Gastrocnemius medialis (tissue), 4 donors: ENCODE measurements at regions of chr1 and their contacts with region 1.

Region 1: DNA sequence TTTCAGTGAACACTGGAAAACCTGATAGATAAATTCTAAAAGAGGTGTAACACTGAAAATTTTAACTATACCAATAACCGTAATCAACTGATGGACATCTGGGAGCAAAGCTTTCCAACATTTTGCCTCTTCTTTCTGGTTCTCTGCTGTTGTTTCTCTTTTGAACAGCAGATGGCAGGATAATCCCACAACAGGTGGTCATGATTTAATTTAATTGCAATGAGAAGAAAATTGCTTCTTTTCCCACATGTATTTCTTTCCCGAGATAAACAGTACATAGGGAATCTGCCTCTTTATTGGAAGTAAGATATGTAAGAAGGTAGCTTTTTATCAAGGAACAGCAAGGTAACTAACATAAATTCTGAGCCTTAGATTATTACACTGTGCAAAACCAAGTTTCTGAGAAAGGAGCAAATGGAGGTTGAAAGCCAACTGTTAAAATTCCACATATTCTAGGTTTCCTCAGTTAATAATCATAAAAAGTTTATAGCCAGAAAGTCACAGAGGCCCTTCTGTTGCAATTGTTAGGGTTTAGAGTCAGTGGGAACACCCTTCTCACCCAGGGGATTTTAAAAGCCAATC is 72.9 kb downstream of the RPS6KA1 start:
- DNase-seq: peak in 1 of 2 donors; percentile 19
- ATAC-seq: peak; percentile 42 to 66
- H3K4me3 ChIP-seq: no peak overlapping the region
- H3K27ac ChIP-seq: no peak overlapping the region
- H3K4me1 ChIP-seq: no peaks in the 10 kb centered on the region
- H3K27me3 ChIP-seq: no peaks in the 10 kb centered on the region
- CTCF ChIP-seq: peak; percentile 80 to 98 (median 89)
- POLR2A ChIP-seq: no peak

Region 2: GRCh38 chr1:26677306-26678115 is 75.0 kb after region 1 on chr1:
- in situ Hi-C with region 1: loop called in 3 of 4 experiments (anchors 10 kb)
- intact Hi-C with region 1: loop called (anchors 1 kb)
- DNase-seq: peak; percentile 81 to 91
- ATAC-seq: peak; percentile 100
- H3K4me3 ChIP-seq: peak overlapping the region in 3 of 4 donors; percentile 2 to 38 (median 10)
- H3K27ac ChIP-seq: peak overlapping the region in 3 of 4 donors; percentile 19 to 51 (median 45)
- H3K4me1 ChIP-seq: peaks cover 4 to 9% of the 10 kb centered on the region in 2 donors
- H3K27me3 ChIP-seq: no peaks in the 10 kb centered on the region
- CTCF ChIP-seq: peak; percentile 74 to 88 (median 79)
- POLR2A ChIP-seq: no peak

Region 3: DNA sequence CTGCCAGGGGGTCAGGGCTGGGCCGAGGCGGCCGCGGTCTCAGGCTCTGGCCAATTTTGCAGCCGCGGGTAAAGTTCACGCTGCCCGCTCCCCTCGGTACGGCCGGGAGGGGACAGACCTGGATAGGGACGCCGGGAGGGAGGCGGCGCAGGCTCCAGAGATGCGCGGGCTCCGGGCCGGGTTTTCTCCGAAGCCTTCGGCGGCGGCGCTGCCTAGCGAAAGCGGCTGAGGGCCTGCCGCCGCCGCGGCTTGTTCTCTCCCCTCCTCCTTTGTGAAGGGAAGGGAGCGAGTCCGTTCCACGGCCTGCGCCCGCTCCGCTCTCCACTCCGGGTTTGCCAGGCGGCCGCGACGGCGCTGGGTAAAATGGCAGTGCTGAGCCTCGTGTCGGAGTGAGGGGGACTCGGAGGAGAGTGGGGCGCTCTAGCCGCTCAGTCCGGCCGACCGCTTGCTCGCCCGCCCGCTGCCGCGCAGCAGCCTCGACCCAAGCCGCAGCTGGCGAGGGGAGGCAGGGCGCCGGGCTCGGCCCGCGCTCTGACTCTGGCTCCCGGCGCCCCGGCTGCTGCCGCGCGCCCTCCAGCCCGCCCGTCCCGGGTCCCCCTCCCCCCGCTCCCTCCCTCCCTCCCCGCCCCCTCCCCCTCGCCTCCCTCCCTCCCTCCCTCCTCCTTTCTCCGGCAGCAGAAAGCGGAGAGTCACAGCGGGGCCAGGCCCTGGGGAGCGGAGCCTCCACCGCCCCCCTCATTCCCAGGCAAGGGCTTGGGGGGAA is 93.1 kb after region 1 on chr1 and contains the start of gene ARID1A:
- in situ Hi-C with region 1: no loop called
- intact Hi-C with region 1: loop called (anchors 5 kb)
- DNase-seq: peak; percentile 90 to 95
- ATAC-seq: peak; percentile 55 to 61
- H3K4me3 ChIP-seq: peak within 1 kb of the TSS; percentile 75 to 89 (median 84)
- H3K27ac ChIP-seq: peak within 1 kb of the TSS; percentile 92 to 95 (median 95)
- H3K4me1 ChIP-seq: peaks cover 49 to 56% of the 10 kb centered on the region in 2 donors
- H3K27me3 ChIP-seq: no peaks in the 10 kb centered on the region
- CTCF ChIP-seq: peak in 4 of 5 experiments; percentile 15 to 68 (median 38)
- POLR2A ChIP-seq: peak; percentile 69 to 77
- total RNA-seq, gene ARID1A: 22.3 to 51.0 (median 35.0) TPM

Region 4: DNA sequence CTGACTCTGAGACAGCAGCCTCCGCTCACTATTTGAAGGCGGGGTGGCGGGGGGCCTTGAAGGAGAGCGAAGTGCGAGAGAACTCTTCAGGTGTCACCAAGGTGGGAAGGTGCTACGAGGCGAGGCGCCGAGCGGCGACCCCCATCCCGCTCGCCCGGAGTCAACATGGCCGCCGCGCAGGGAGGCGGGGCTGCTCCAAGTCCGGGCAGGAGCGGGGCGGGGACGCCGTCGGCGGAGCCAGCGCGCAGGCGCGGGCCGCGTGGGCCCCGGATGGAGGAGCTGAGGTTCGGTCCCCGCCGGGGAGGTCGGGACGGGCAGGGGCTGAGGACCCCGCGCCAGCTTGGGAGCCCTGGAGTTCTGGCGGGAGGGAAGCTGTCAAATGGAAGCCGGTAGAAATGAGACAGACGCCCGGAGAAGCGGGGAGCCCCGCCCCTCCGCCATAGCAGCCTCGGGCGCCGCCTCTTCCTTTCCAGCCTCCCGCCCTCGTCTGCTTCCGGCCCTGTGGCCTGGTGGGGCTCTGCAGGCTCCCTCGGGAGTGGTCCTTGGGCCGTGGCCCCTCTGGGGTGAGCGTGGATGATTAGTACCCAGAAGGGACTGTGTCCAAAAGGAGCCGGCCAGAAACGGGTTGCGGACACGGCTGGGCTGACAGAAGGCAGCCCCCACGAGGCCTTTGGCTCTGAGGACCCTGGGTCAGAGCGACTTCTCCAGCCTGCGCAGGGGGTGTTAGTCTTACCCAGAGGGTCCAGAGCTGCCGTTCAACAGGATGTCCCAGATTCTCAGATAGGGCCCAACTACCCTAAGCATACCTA is 185.4 kb after region 1 on chr1 and contains the start of gene PIGV:
- in situ Hi-C with region 1: loop called in 3 of 4 experiments (anchors 5 to 10 kb)
- intact Hi-C with region 1: loop called (anchors 1 kb)
- DNase-seq: peak; percentile 68 to 81
- ATAC-seq: peak; percentile 81 to 82
- H3K4me3 ChIP-seq: peak within 1 kb of the TSS; percentile 69 to 87 (median 84)
- H3K27ac ChIP-seq: peak within 1 kb of the TSS; percentile 93 to 99 (median 98)
- H3K4me1 ChIP-seq: peaks cover 51 to 67% of the 10 kb centered on the region in 2 donors
- H3K27me3 ChIP-seq: no peaks in the 10 kb centered on the region
- CTCF ChIP-seq: peak; percentile 23 to 40 (median 38)
- POLR2A ChIP-seq: peak; percentile 78 to 84
- total RNA-seq, gene PIGV: 2.9 to 16.0 (median 5.8) TPM

Region 5: DNA sequence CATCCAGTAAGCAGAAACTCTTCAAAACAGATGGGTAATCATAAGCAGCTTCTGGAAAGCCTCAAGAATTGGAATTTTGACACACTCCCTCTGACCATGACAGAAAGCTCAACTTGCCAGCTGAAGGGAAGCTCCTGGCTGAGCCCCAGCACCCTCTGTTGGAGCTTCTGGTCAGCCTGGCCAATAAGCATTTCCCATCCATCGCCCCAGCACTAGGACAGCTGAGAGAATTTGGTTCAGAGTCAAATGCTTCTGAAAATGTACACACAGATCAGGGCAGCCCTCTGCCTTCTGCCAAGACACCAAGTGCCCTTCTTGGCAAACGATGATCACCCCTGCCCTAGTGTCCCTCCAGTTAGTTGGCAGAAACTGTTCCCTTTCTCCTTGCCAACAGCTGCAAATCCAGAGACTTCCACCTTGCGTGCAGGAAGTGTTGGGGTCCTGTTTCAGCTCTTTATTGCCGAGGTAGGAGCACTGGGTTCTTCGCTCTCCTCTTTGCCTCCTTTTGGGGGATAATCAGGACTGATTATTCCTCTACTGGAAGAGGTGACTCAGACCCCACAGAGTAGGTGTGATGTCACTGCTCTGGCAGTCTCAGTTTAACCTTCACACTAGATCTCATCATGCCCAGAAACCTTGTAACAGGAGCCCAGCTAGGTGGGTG is 197.1 kb after region 1 on chr1:
- in situ Hi-C with region 1: loop called (anchors 5 to 10 kb)
- intact Hi-C with region 1: no loop called
- DNase-seq: peak; percentile 51 to 75
- ATAC-seq: peak; percentile 82 to 85
- H3K4me3 ChIP-seq: peak overlapping the region; percentile 5 to 24 (median 14)
- H3K27ac ChIP-seq: peak overlapping the region; percentile 77 to 89 (median 80)
- H3K4me1 ChIP-seq: peaks cover 30 to 39% of the 10 kb centered on the region in 2 donors
- H3K27me3 ChIP-seq: no peaks in the 10 kb centered on the region
- CTCF ChIP-seq: no peak
- POLR2A ChIP-seq: no peak

Region 6: GRCh38 chr1:26874896-26875295 is 272.4 kb after region 1 on chr1:
- in situ Hi-C with region 1: no loop called
- intact Hi-C with region 1: loop called (anchors 5 kb)
- DNase-seq: no peak
- ATAC-seq: no peak
- H3K4me3 ChIP-seq: no peak overlapping the region
- H3K27ac ChIP-seq: no peak overlapping the region
- H3K4me1 ChIP-seq: peaks cover 0 to 4% of the 10 kb centered on the region in 2 donors
- H3K27me3 ChIP-seq: no peaks in the 10 kb centered on the region
- CTCF ChIP-seq: no peak
- POLR2A ChIP-seq: no peak